PC-9 (cell line): ENCODE measurements at regions of chr3 and their contacts with region 1.

Region 1: DNA sequence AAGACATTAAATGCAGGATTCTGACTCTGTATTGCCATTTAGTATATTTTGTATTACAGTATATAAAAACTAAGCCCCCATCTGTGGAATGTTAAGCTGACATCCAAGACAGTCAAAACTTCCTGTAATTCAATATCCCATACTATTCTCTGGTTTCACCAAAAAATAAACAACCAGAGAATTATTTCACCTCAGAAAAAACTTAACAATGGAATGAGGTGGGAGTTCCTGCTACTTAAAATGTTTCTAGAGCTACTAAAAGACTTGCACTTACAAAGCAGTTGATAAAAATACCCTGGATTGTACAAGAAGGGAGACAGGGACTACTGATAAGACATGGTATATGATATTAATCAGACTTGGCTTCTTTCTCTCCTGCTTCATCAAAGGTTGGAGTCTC is 8.3 kb downstream of the ARL13B start:
- DNase-seq: no peak
- H3K4me3 ChIP-seq: no peak overlapping the region
- H3K27ac ChIP-seq: peak overlapping the region; percentile 3; the same call in 1 of the 2 replicates
- H3K4me1 ChIP-seq: peaks cover 11% of the 10 kb centered on the region
- H3K27me3 ChIP-seq: no peaks in the 10 kb centered on the region
- CTCF ChIP-seq: no peak

Region 2: DNA sequence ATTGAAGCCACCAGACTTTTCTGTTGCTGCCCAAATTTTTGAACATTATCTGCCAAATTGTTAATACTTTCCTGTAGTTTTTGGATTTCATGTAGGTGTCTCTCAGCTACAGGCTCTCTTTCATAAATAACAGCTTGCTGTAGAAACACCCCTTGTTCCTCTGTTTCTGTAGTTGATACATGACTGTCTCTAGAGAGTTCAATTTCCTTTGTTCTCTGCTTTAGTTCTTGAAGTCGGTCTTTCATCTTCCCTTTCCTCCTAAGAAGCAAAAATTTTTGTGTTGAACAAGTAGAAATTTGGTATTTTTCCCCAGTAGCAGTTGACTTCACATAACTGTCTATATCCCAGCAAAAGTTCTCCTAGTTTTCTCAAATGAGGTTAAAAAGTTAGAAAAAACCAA is 26.7 kb after region 1 on chr3:
- CTCF ChIA-PET with region 1: interaction called, 6 read pairs
- POLR2A ChIA-PET with region 1: interaction called, 11 read pairs
- intact Hi-C with region 1: no loop called
- DNase-seq: no peak
- H3K4me3 ChIP-seq: no peak overlapping the region
- H3K27ac ChIP-seq: no peak overlapping the region
- H3K4me1 ChIP-seq: no peaks in the 10 kb centered on the region
- H3K27me3 ChIP-seq: no peaks in the 10 kb centered on the region
- CTCF ChIP-seq: no peak

Region 3: DNA sequence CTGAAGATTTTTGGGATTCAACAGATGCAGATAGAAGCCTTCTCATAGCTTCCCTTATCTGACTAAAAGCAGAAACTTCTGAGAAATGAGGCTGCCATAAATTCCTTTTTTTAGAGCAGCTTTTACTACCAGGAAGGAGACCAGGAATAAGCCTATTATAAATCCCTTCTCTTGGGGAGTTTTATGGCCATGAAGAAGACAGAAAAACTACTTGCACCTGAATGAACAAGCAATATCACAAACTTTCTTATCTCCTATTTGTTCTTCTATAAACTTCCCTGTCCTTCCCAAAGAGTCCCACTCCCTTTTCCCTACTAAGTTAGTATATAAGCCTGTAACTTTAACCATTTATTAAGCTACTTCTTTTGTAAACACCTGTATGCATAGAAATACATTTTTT is 677.6 kb after region 1 on chr3:
- CTCF ChIA-PET with region 1: no interaction called
- POLR2A ChIA-PET with region 1: no interaction called
- intact Hi-C with region 1: no loop called
- DNase-seq: no peak
- H3K4me3 ChIP-seq: no peak overlapping the region
- H3K27ac ChIP-seq: no peak overlapping the region
- H3K4me1 ChIP-seq: no peaks in the 10 kb centered on the region
- H3K27me3 ChIP-seq: no peaks in the 10 kb centered on the region
- CTCF ChIP-seq: no peak